ENCODE measurements at regions of chr12 and their contacts with region 1.

Region 1: DNA sequence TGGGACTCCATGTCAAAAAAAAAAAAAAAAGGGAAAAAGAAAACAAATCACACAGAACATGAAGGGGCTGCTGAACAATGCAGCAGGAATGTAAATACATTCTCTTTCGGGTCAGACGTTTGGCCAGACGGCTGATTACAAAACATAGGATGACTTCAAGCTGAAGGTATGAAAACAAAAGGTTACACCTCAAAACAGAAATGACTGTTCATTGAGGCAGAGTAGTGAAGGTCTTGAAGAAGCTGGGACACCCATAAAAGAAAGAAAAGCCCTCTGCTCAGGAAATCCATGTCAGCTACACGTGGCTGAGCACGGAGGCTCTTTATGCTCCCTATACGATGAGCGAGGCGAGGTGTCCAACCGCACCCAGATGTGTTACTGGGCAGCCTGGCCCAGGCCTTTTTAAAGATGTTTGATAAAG is 37.7 kb downstream of the FGD4 start:
- DNase-seq: no peak
- H3K4me3 ChIP-seq: no peak overlapping the region
- H3K27ac ChIP-seq: no peak overlapping the region
- H3K4me1 ChIP-seq: no peaks in the 10 kb centered on the region
- H3K27me3 ChIP-seq: no peaks in the 10 kb centered on the region
- CTCF ChIP-seq: no peak

Region 2: DNA sequence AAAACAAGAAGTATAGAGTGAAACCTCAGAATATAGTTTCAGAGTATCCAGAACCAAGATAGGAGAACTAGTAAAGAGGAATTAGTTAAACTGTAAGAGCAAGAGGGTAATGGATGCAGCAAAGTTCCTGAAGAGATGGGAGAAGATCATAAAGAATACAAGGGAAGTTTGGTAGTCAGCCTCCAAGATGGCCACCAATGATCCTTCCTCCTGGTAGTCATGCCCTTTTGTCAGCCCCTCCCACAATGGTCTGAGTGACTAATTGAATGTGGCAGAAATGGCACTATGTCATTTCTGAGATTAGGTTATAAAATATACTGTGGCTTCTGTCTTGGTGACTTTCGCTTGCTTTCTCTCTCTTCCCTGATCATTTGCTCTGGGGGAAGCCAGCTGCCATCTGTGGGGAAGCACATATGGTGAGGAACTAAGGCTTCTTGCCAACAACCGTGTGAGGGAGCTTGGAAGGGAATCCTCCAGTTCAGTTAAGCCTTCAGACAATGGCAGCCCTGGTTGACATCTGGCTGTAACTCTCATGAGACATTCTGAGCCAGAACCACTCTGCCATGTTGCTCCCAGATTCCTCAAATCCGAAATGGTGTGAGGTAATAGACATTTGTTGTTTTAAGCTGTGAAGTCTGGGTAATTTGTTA is 653.0 kb before region 1 on chr12:
- CTCF ChIA-PET with region 1: no interaction called
- POLR2A ChIA-PET with region 1: interaction called, 20 read pairs
- intact Hi-C with region 1: no loop called
- DNase-seq: peak; percentile 21
- H3K4me3 ChIP-seq: no peak overlapping the region
- H3K27ac ChIP-seq: no peak overlapping the region
- H3K4me1 ChIP-seq: no peaks in the 10 kb centered on the region
- H3K27me3 ChIP-seq: no peaks in the 10 kb centered on the region
- CTCF ChIP-seq: no peak

Region 3: DNA sequence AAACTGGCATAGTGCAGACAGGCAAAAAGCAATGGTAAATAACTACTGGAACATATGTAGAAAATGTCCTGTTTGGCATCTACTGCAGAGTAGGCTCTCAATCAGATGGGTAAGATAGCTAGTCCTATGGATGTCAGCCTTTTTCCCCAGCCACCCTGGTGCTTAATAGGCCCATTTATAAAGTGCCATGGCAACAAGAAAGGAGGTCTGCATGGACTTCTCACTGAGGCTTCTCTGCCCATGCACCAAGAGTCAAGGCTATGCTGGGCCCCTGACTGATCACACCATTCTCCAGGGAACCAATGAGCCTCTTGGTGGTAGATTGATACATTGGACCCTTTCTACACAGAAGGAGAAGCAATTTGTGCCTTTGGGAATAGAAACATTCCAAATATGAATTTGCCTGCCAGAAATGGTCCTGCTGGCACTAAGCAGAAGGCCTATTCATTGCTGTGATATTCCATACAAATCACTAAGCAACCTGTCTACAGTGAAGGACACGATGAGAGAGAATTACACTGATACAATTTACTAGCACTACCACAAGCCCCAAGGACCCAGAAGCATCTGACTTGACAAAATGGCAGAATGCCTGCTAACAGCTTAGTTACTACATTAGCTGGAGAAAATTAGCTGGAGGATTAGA is 434.1 kb before region 1 on chr12:
- CTCF ChIA-PET with region 1: no interaction called
- POLR2A ChIA-PET with region 1: no interaction called
- intact Hi-C with region 1: no loop called
- DNase-seq: no peak
- H3K4me3 ChIP-seq: no peak overlapping the region
- H3K27ac ChIP-seq: no peak overlapping the region
- H3K4me1 ChIP-seq: no peaks in the 10 kb centered on the region
- H3K27me3 ChIP-seq: no peaks in the 10 kb centered on the region
- CTCF ChIP-seq: no peak

Region 4: GRCh38 chr12:32418238-32418889 is 18.7 kb before region 1 on chr12:
- CTCF ChIA-PET with region 1: no interaction called
- POLR2A ChIA-PET with region 1: interaction called, 15 read pairs
- intact Hi-C with region 1: no loop called
- DNase-seq: no peak
- H3K4me3 ChIP-seq: no peak overlapping the region
- H3K27ac ChIP-seq: no peak overlapping the region
- H3K4me1 ChIP-seq: peaks cover 7% of the 10 kb centered on the region
- H3K27me3 ChIP-seq: no peaks in the 10 kb centered on the region
- CTCF ChIP-seq: no peak